ENCODE measurements at regions of chr2 and their contacts with region 1.

Region 1: GRCh38 chr2:42102024-42102590 is 54.3 kb downstream of the PKDCC start:
- DNase-seq: peak; percentile 86 to 98 (median 92)
- ATAC-seq: peak; percentile 72
- H3K4me3 ChIP-seq: peak overlapping the region; percentile 51
- H3K4me3 Mint-ChIP-seq: peak overlapping the region; percentile 88
- H3K27ac ChIP-seq: peak overlapping the region; percentile 99 to 100
- H3K27ac Mint-ChIP-seq: no peak overlapping the region
- H3K4me1 ChIP-seq: peaks cover 98% of the 10 kb centered on the region
- H3K4me1 Mint-ChIP-seq: peaks cover 37% of the 10 kb centered on the region
- H3K27me3 ChIP-seq: no peaks in the 10 kb centered on the region
- H3K27me3 Mint-ChIP-seq: no peaks in the 10 kb centered on the region
- CTCF ChIP-seq: no peak

Region 2: DNA sequence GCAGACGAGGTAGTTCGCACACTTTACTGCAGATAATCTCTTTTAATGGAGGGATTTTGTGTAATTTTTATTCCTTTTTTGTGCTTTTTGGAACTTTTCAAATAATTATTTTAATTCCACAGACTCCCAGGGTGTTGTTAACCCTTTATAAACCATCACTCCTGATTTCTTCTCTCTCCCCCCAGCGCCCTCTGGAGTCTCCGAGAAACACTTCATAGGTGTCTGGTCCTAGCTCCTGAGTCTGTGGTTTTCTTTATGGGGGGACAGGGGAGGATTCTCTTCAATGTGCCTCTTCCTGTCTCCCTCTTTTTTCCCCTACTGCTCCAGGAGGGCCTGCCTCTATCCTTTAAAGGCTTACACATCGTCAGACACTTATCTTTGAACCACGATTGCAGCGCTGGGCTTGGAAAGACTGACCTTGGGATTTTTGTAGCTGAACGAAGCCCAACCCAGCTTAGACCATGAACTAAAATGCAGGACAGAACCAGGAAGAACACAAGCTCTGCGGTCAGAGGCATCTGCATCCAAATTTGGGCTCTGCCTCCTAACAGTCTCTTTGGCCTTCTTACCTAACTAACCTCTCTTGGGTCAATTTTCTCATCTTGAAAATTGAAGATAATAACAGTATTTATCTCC is 61.3 kb before region 1 on chr2:
- CTCF ChIA-PET with region 1: no interaction called
- POLR2A ChIA-PET with region 1: no interaction called
- intact Hi-C with region 1: no loop called
- DNase-seq: no peak
- ATAC-seq: no peak
- H3K4me3 ChIP-seq: no peak overlapping the region
- H3K4me3 Mint-ChIP-seq: no peak overlapping the region
- H3K27ac ChIP-seq: no peak overlapping the region
- H3K27ac Mint-ChIP-seq: no peak overlapping the region
- H3K4me1 ChIP-seq: no peaks in the 10 kb centered on the region
- H3K4me1 Mint-ChIP-seq: no peaks in the 10 kb centered on the region
- H3K27me3 ChIP-seq: peaks cover 5 to 29% of the 10 kb centered on the region in 2 experiments
- H3K27me3 Mint-ChIP-seq: peaks cover 51% of the 10 kb centered on the region
- CTCF ChIP-seq: no peak

Region 3: DNA sequence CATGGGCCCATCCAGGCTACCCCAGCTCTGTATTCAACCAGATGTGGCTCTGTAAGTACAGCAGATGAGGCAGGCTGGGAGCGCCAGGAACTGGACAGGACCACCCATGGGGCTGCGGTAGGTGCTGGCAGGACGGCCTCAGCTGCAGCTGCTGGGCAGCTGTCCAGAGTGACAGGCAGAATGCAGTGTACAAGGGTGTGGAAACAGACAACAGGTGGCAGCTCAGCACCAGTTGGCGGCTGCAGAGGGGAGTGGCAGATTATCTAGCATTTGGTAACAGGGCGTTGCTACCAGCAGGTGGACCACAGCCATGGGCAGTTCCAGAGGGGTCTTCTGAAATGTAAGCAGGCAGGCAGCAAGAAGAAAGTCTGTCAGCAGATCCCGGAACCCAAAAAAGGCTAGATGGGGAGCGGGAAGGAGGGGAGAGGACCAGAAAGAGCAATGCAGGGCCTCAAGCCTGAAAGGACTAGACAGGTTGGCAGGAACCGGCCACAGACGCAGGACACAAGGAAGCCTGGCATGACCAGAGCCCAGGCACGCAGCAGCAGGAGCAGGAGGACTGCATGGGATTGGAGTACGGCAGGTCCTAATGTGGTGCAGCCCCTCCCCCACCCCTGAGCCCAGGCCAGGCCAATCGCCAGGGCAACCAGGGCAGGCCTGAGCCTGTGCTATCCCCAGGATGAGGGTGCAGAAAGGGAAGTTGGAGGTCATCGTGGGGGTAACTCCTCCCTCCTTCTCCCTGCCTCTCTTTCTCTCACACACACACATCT is 29.6 kb before region 1 on chr2:
- CTCF ChIA-PET with region 1: no interaction called
- POLR2A ChIA-PET with region 1: no interaction called
- intact Hi-C with region 1: no loop called
- DNase-seq: no peak
- ATAC-seq: no peak
- H3K4me3 ChIP-seq: no peak overlapping the region
- H3K4me3 Mint-ChIP-seq: no peak overlapping the region
- H3K27ac ChIP-seq: no peak overlapping the region
- H3K27ac Mint-ChIP-seq: no peak overlapping the region
- H3K4me1 ChIP-seq: no peaks in the 10 kb centered on the region
- H3K4me1 Mint-ChIP-seq: no peaks in the 10 kb centered on the region
- H3K27me3 ChIP-seq: peaks cover 8 to 11% of the 10 kb centered on the region in 2 experiments
- H3K27me3 Mint-ChIP-seq: peaks cover 40% of the 10 kb centered on the region
- CTCF ChIP-seq: no peak

Region 4: DNA sequence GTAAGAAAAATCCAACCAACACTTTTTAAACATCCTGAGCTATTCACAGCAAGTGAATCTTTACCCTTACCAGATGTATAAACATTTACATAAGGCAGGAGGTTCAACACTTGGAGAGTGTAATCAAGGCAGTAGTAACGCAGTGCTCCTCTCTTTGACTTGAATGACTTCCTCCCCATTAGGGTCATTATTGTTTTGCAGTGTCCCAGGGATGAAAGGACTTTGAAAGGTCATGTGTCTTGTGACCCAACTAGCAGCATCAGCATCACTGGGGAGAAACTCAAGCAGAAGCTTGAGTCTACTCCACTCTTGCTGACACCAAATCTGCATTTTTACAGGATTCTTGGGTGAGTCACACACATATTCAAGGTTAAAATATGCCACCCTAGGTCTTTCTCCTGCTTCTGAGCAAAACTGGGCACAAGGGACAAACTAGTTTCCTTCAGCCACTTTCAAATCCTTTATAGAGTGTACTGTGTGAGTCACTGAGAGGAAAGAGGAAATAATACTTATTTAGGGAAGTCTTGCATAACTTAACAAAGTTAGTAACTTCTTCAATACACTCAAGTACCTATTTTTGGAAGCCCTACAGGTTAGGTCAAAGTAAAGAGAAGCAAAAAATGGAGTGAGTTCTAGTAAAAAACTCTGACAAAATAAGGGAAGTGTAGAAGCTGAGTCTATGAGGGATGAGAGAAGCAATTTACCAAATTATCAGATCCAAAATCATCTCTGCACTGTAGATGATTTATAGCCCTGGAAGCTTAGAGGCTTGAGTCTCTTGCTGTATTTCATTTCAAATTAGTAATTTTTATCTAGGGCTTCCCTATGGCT is 16.0 kb after region 1 on chr2:
- CTCF ChIA-PET with region 1: interaction called, 22 read pairs
- POLR2A ChIA-PET with region 1: interaction called, 255 read pairs
- intact Hi-C with region 1: no loop called
- DNase-seq: peak in 4 of 14 experiments; percentile 30 to 71 (median 52)
- ATAC-seq: peak; percentile 65
- H3K4me3 ChIP-seq: no peak overlapping the region
- H3K4me3 Mint-ChIP-seq: peak overlapping the region; percentile 40
- H3K27ac ChIP-seq: no peak overlapping the region
- H3K27ac Mint-ChIP-seq: peak overlapping the region; percentile 70
- H3K4me1 ChIP-seq: peaks cover 43% of the 10 kb centered on the region
- H3K4me1 Mint-ChIP-seq: peaks cover 62% of the 10 kb centered on the region
- H3K27me3 ChIP-seq: no peaks in the 10 kb centered on the region
- H3K27me3 Mint-ChIP-seq: no peaks in the 10 kb centered on the region
- CTCF ChIP-seq: no peak

Region 5: DNA sequence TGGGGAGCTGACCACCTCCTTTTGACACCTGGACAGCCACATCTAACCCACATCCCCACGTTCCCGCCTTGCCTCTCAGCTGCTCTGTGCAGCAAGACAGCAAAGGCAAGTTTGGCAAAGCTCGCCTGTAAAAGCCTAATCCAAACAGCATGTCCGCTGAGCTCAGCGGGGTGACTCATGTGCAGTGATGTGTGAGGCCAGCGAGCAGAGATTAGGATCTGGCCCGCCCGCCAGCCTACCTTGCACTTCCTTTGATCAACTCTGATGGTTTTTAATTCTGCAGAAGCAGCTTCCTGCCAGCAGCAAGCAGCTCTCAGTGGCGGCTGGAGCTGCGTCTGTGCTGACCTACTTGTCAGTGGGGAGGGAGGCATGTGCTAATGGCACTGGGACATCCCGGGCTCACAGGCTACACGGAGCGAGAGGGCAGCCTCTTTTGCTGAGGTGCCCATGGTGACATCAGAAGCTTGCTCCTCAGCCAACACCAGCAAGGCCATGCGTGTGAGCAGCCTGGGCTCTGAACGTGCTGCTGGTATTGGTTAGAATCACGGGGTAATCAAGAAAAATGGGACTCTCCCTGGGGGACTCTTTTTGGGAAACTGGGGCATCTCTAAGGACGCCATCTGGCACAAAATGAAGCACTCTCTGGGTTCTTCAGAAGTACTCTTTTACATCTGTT is 31.0 kb after region 1 on chr2:
- CTCF ChIA-PET with region 1: interaction called, 7 read pairs
- POLR2A ChIA-PET with region 1: interaction called, 255 read pairs
- intact Hi-C with region 1: loop called (anchors 1 to 2 kb)
- DNase-seq: peak; percentile 81 to 98 (median 88)
- ATAC-seq: peak; percentile 87
- H3K4me3 ChIP-seq: peak overlapping the region; percentile 29
- H3K4me3 Mint-ChIP-seq: peak overlapping the region; percentile 63
- H3K27ac ChIP-seq: peak overlapping the region; percentile 78 to 95
- H3K27ac Mint-ChIP-seq: peak overlapping the region; percentile 87
- H3K4me1 ChIP-seq: peaks cover 100% of the 10 kb centered on the region
- H3K4me1 Mint-ChIP-seq: peaks cover 88% of the 10 kb centered on the region
- H3K27me3 ChIP-seq: no peaks in the 10 kb centered on the region
- H3K27me3 Mint-ChIP-seq: no peaks in the 10 kb centered on the region
- CTCF ChIP-seq: no peak

Region 6: DNA sequence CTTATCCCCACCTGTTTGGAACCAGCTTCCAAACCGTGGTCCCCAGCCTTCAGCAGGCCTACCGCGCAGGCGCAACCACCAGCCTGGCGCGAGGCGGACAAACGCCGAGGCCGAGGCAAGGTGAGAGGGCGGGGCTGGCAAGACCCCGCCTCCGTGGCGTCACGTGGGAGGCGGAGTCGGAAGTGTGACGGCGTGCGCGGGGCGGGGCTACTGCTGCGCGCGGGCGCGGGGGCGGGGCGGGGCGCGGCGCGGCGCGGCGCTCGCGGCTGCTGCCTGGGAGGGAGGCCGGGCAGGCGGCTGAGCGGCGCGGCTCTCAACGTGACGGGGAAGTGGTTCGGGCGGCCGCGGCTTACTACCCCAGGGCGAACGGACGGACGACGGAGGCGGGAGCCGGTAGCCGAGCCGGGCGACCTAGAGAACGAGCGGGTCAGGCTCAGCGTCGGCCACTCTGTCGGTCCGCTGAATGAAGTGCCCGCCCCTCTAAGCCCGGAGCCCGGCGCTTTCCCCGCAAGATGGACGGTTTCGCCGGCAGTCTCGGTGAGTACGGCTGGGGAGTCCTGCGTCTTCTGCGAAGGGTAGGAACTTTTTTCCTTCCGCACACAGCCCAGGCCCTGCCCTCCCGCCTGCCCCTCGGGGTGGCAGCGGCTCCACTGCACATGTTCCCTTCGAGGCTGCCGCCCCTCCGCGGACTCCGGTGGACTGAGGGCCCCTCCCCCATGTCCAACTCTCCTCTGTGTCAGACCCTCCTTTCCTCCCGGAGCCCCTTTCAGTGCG is 67.2 kb after region 1 on chr2 and contains the start of gene EML4:
- CTCF ChIA-PET with region 1: interaction called, 3 read pairs
- POLR2A ChIA-PET with region 1: interaction called, 230 read pairs
- intact Hi-C with region 1: loop called (anchors 1 to 2 kb)
- DNase-seq: peak; percentile 79 to 95 (median 89)
- ATAC-seq: peak; percentile 87
- H3K4me3 ChIP-seq: peak within 1 kb of the TSS; percentile 96
- H3K4me3 Mint-ChIP-seq: no peak within 1 kb of the TSS
- H3K27ac ChIP-seq: peak within 1 kb of the TSS; percentile 88 to 93
- H3K27ac Mint-ChIP-seq: no peak within 1 kb of the TSS
- H3K4me1 ChIP-seq: peaks cover 17% of the 10 kb centered on the region
- H3K4me1 Mint-ChIP-seq: peaks cover 9% of the 10 kb centered on the region
- H3K27me3 ChIP-seq: no peaks in the 10 kb centered on the region
- H3K27me3 Mint-ChIP-seq: no peaks in the 10 kb centered on the region
- CTCF ChIP-seq: no peak
- total RNA-seq, gene EML4: 219 to 228 TPM

Region 7: GRCh38 chr2:42196403-42197267 is 94.5 kb after region 1 on chr2:
- CTCF ChIA-PET with region 1: interaction called, 10 read pairs
- POLR2A ChIA-PET with region 1: interaction called, 15 read pairs
- intact Hi-C with region 1: no loop called
- DNase-seq: peak in 12 of 14 experiments; percentile 16 to 79 (median 37)
- ATAC-seq: peak; percentile 82
- H3K4me3 ChIP-seq: no peak overlapping the region
- H3K4me3 Mint-ChIP-seq: peak overlapping the region; percentile 63
- H3K27ac ChIP-seq: no peak overlapping the region
- H3K27ac Mint-ChIP-seq: peak overlapping the region; percentile 61
- H3K4me1 ChIP-seq: peaks cover 48% of the 10 kb centered on the region
- H3K4me1 Mint-ChIP-seq: peaks cover 89% of the 10 kb centered on the region
- H3K27me3 ChIP-seq: no peaks in the 10 kb centered on the region
- H3K27me3 Mint-ChIP-seq: no peaks in the 10 kb centered on the region
- CTCF ChIP-seq: peak; percentile 92

Region 8: GRCh38 chr2:43139996-43140621 is 1038.0 kb after region 1 on chr2:
- CTCF ChIA-PET with region 1: no interaction called
- POLR2A ChIA-PET with region 1: interaction called, 3 read pairs
- intact Hi-C with region 1: loop called in 1 of 2 experiments (anchors 5 kb)
- DNase-seq: peak in 5 of 14 experiments; percentile 11 to 76 (median 59)
- ATAC-seq: no peak
- H3K4me3 ChIP-seq: no peak overlapping the region
- H3K4me3 Mint-ChIP-seq: peak overlapping the region; percentile 31
- H3K27ac ChIP-seq: peak overlapping the region; percentile 23 to 54
- H3K27ac Mint-ChIP-seq: peak overlapping the region; percentile 99
- H3K4me1 ChIP-seq: peaks cover 85% of the 10 kb centered on the region
- H3K4me1 Mint-ChIP-seq: peaks cover 76% of the 10 kb centered on the region
- H3K27me3 ChIP-seq: no peaks in the 10 kb centered on the region
- H3K27me3 Mint-ChIP-seq: no peaks in the 10 kb centered on the region
- CTCF ChIP-seq: no peak